Activated naive CD4-positive, alpha-beta T cell treated with anti-CD3 and anti-CD28 coated beads for 36 hours (primary cell): ENCODE measurements at regions of chr17 and their contacts with region 1.

Region 1: GRCh38 chr17:31494259-31495021 is 103.0 kb downstream of the RAB11FIP4 start:
- DNase-seq: peak; percentile 86
- H3K4me3 Mint-ChIP-seq: peak overlapping the region; percentile 64
- H3K27ac Mint-ChIP-seq: peak overlapping the region; percentile 96
- H3K4me1 Mint-ChIP-seq: peaks cover 89% of the 10 kb centered on the region
- H3K27me3 Mint-ChIP-seq: no peaks in the 10 kb centered on the region

Region 2: GRCh38 chr17:31549525-31550388 is 55.3 kb after region 1 on chr17:
- CTCF ChIA-PET with region 1: no interaction called
- intact Hi-C with region 1: loop called (anchors 2 kb)
- DNase-seq: peak; percentile 95
- H3K4me3 Mint-ChIP-seq: peak overlapping the region; percentile 87
- H3K27ac Mint-ChIP-seq: peak overlapping the region; percentile 87
- H3K4me1 Mint-ChIP-seq: peaks cover 23% of the 10 kb centered on the region
- H3K27me3 Mint-ChIP-seq: no peaks in the 10 kb centered on the region

Region 3: DNA sequence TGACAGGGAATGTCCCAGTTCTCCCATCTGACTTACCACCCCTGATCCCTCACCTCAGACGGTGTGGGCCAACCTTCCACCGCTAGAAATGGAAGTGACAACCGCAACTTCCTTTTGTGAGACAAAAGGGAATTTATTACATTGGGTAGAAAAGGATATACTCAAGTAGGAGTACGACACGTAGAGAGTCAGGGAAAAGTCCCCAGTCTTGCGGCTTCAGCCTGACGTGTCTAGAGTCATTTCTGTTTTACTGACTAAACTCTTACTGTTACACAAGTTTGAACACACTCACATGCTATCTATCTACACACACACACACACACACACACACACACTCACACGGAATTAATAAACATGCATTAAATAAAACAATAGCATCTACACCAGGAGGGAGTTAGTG is 185.7 kb after region 1 on chr17:
- CTCF ChIA-PET with region 1: no interaction called
- intact Hi-C with region 1: loop called (anchors 5 kb)
- DNase-seq: peak; percentile 92
- H3K4me3 Mint-ChIP-seq: peak overlapping the region; percentile 44
- H3K27ac Mint-ChIP-seq: peak overlapping the region; percentile 76
- H3K4me1 Mint-ChIP-seq: peaks cover 13% of the 10 kb centered on the region
- H3K27me3 Mint-ChIP-seq: peaks cover 38% of the 10 kb centered on the region

Region 4: DNA sequence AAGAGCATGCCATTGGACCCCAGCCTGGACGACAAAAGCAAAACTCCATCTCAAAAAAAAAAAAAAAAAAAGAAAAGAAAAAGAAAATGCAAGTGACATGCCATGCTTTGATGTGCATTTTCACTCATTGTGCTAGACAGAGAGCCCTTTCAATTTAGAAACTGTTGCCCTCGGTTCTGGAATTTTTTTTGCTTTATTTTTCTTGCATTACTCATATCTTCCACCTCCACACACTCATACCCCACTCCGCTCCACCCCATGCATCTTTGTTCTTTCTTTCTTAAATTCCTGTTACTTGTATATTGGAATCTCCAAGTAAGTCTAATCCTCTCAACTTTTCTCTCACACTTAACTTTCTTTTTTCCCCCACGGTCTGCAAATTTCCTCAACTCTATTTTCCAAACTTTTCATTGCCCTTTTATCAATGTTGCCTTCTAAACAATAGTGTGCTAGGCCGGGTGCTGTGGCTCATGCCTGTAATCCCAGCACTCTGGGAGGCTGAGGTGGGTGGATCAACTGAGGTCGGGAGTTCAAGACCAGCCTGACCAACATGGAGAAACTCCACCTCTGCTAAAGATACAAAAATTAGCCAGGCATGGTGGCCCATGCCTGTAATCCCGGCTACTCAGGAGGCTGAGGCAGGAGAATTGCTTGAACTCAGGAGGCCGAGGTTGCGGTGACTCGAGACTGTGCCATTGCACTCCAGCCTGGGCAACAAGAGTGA is 425.5 kb after region 1 on chr17:
- CTCF ChIA-PET with region 1: interaction called, 3 read pairs
- intact Hi-C with region 1: loop called (anchors 5 kb)
- DNase-seq: peak; percentile 61
- H3K4me3 Mint-ChIP-seq: peak overlapping the region; percentile 19
- H3K27ac Mint-ChIP-seq: peak overlapping the region; percentile 73
- H3K4me1 Mint-ChIP-seq: peaks cover 35% of the 10 kb centered on the region
- H3K27me3 Mint-ChIP-seq: peaks cover 18% of the 10 kb centered on the region